Ascending aorta (tissue), 2 donors: ENCODE measurements at regions of chr20 and their contacts with region 1.

Region 1: GRCh38 chr20:815914-816606 is 17.5 kb upstream of the FAM110A start:
- DNase-seq: peak in 1 of 2 donors; percentile 70
- H3K4me3 ChIP-seq: no peak overlapping the region
- H3K27ac ChIP-seq: no peak overlapping the region
- H3K4me1 ChIP-seq: no peaks in the 10 kb centered on the region
- H3K27me3 ChIP-seq: no peaks in the 10 kb centered on the region
- CTCF ChIP-seq: peak; percentile 80 to 96 (median 96)

Region 2: GRCh38 chr20:768426-768978 is 47.6 kb before region 1 on chr20 and contains the start of gene SLC52A3:
- intact Hi-C with region 1: no loop called
- DNase-seq: no peak
- H3K4me3 ChIP-seq: no peak within 1 kb of the TSS
- H3K27ac ChIP-seq: no peak within 1 kb of the TSS
- H3K4me1 ChIP-seq: no peaks in the 10 kb centered on the region
- H3K27me3 ChIP-seq: no peaks in the 10 kb centered on the region
- CTCF ChIP-seq: no peak
- total RNA-seq, gene SLC52A3: 3.0 TPM

Region 3: GRCh38 chr20:956330-956951 is 140.4 kb after region 1 on chr20:
- intact Hi-C with region 1: loop called (anchors 1 kb)
- DNase-seq: peak in 1 of 2 donors; percentile 75
- H3K4me3 ChIP-seq: no peak overlapping the region
- H3K27ac ChIP-seq: no peak overlapping the region
- H3K4me1 ChIP-seq: no peaks in the 10 kb centered on the region
- H3K27me3 ChIP-seq: no peaks in the 10 kb centered on the region
- CTCF ChIP-seq: peak; percentile 84 to 93 (median 93)

Region 4: DNA sequence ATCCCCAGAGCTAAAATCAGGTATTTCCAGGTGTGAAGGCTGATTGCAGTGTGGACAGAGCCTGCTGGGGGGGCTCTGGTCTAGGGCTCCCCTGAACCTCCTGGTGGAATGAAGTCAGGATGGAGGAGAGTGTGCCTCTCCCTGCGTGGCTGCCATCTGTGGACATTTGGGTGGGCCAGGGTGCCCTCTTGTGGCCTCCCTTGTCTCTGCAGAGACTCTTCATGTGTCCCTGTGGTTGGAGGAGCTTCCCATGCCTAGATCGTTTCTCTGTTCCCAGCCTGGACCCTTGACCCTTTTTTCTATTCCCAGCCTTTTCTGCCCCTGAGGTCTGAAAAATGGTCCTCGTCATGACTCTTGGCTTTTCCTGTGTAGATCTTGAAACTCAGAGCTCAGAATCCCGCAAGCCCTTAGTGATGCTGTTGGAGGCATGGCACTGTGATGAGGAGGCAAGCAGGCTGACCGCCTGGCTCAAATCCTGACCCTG is 292.4 kb after region 1 on chr20:
- intact Hi-C with region 1: loop called (anchors 1 kb)
- DNase-seq: peak in 1 of 2 donors; percentile 71
- H3K4me3 ChIP-seq: no peak overlapping the region
- H3K27ac ChIP-seq: no peak overlapping the region
- H3K4me1 ChIP-seq: no peaks in the 10 kb centered on the region
- H3K27me3 ChIP-seq: no peaks in the 10 kb centered on the region
- CTCF ChIP-seq: peak; percentile 23 to 62 (median 42)

Region 5: GRCh38 chr20:1212607-1213396 is 396.7 kb after region 1 on chr20:
- intact Hi-C with region 1: loop called (anchors 2 kb)
- DNase-seq: peak in 1 of 2 donors; percentile 76
- H3K4me3 ChIP-seq: no peak overlapping the region
- H3K27ac ChIP-seq: no peak overlapping the region
- H3K4me1 ChIP-seq: no peaks in the 10 kb centered on the region
- H3K27me3 ChIP-seq: no peaks in the 10 kb centered on the region
- CTCF ChIP-seq: peak; percentile 42 to 70 (median 57)